ENCODE measurements at regions of chr6 and their contacts with region 1.

Region 1: GRCh38 chr6:26596579-26597388 is at the start of gene ABT1:
- DNase-seq: peak; percentile 99
- H3K4me3 ChIP-seq: peak within 1 kb of the TSS; percentile 30 to 87 (median 69)
- H3K27ac ChIP-seq: peak within 1 kb of the TSS; percentile 80
- H3K4me1 ChIP-seq: peaks cover 18% of the 10 kb centered on the region
- H3K27me3 ChIP-seq: peaks cover 8 to 11% of the 10 kb centered on the region in 2 experiments
- CTCF ChIP-seq: no peak
- POLR2A ChIP-seq: peak; percentile 80
- total RNA-seq, gene ABT1: 18.5 and 20.1 TPM in 2 replicates

Region 2: DNA sequence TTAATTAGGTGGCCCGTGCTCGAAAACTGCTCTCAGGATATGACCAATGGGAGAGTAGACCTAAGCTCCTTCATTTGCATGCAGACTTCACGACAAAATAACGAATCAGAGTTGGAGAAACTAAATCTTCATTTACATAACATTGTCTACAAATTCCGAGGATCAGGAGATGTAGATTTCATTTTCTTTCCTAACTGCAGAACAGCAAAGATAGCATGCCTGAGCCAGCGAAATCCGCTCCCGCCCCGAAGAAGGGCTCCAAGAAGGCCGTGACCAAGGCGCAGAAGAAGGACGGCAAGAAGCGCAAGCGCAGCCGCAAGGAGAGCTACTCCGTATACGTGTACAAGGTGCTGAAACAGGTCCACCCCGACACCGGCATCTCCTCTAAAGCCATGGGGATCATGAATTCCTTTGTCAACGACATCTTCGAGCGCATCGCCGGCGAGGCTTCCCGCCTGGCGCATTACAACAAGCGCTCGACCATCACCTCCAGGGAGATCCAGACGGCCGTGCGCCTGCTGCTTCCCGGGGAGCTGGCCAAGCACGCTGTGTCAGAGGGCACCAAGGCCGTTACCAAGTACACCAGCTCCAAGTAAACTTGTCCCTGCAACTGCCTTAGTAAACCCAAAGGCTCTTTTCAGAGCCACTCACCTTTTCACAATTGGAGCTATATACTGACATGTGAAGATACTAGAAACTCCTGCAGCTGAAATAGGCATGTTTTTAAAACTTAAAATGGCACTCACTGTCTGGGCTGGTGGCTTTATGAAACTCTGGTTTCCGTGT is 413.0 kb before region 1 on chr6:
- CTCF ChIA-PET with region 1: interaction called, 12 read pairs
- POLR2A ChIA-PET with region 1: no interaction called
- dilution Hi-C with region 1: no loop called
- intact Hi-C with region 1: no loop called
- DNase-seq: peak; percentile 93
- H3K4me3 ChIP-seq: peak overlapping the region; percentile 13 to 66 (median 34)
- H3K27ac ChIP-seq: peak overlapping the region; percentile 58
- H3K4me1 ChIP-seq: peaks cover 20% of the 10 kb centered on the region
- H3K27me3 ChIP-seq: no peaks in the 10 kb centered on the region
- CTCF ChIP-seq: no peak
- POLR2A ChIP-seq: peak; percentile 59

Region 3: GRCh38 chr6:26329763-26330511 is 266.8 kb before region 1 on chr6:
- CTCF ChIA-PET with region 1: interaction called, 18 read pairs
- POLR2A ChIA-PET with region 1: no interaction called
- dilution Hi-C with region 1: no loop called
- intact Hi-C with region 1: loop called (anchors 1 kb)
- DNase-seq: peak; percentile 52
- H3K4me3 ChIP-seq: peak overlapping the region in 2 of 3 experiments; percentile 92 to 95
- H3K27ac ChIP-seq: no peak overlapping the region
- H3K4me1 ChIP-seq: peaks cover 23% of the 10 kb centered on the region
- H3K27me3 ChIP-seq: peaks cover 0 to 7% of the 10 kb centered on the region in 2 experiments
- CTCF ChIP-seq: no peak
- POLR2A ChIP-seq: no peak

Region 4: DNA sequence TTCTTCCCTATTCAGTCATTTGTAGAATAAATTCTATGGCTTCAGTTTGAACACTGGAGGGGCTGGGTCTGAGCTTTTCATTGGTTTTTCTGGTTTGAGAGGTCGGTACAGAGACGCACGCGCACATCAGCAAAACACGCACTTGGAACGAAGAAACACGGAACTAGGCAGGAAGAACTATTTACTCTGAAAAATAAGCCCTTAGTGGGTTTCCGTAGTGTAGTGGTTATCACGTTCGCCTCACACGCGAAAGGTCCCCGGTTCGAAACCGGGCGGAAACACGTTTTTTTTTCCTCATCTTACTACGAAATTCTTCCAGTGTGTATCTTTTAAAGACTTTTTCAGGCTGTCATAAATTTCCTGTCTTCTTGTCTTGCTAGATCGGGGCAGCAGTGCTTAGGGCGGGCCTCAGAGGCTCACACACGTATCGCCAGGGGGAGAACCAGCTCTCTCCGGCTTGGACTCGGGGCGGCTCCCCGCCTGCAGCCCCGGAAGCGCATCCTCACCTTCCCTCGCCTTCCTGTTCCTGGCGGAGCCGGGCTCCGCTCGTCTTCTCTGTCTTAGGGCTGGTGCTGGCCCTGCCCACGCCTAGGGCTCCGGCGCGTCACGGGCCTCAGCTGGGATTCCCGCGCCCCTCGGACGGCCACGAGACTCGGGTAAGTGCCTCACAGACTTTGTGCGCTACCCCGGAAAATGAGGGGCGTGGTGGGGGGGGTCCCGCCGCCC is 58.8 kb before region 1 on chr6 and contains the start of gene HMGN4:
- CTCF ChIA-PET with region 1: interaction called, 22 read pairs
- POLR2A ChIA-PET with region 1: no interaction called
- dilution Hi-C with region 1: no loop called
- intact Hi-C with region 1: no loop called
- DNase-seq: peak; percentile 93
- H3K4me3 ChIP-seq: peak within 1 kb of the TSS; percentile 87 to 99 (median 98)
- H3K27ac ChIP-seq: peak within 1 kb of the TSS; percentile 85
- H3K4me1 ChIP-seq: peaks cover 21% of the 10 kb centered on the region
- H3K27me3 ChIP-seq: no peaks in the 10 kb centered on the region
- CTCF ChIP-seq: no peak
- POLR2A ChIP-seq: no peak
- total RNA-seq, gene HMGN4: 33.7 and 36.9 TPM in 2 replicates

Region 5: DNA sequence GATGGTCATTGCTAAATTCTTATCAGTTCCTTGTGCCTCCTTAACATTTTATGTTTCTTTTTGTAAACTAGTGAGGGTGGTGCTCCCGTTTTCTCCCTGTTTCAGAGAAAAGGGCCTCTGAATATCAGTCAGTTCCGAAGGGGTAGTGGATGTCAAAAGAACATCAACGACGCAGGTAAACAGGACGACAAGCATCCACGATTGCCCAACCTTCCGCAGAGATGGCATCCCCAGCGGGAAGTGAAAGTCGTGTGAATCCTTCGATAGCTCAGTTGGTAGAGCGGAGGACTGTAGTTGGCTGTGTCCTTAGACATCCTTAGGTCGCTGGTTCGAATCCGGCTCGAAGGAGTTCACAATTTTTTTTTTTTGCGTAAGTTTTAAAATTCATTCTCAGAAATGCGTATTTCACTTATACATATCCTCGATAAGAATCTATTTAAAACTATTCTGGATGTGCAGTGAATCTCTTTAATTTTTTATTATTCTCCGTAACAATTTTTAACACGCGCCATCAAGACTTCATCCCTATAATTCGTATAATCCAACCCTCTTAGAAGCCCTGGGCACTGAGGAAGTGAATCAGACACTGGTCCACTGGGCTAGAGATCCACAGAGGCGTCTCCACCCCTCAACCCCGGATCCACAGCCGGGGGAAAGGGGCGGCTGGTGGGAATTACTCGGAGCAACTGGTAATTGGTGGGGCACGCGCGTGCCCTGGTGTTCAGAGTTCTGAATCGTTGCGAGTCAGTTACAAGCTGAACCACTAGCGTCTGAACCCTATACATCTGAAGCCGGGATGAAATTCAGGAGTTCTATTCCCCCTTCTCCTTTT is 28.0 kb before region 1 on chr6:
- CTCF ChIA-PET with region 1: interaction called, 359 read pairs
- POLR2A ChIA-PET with region 1: no interaction called
- dilution Hi-C with region 1: no loop called
- intact Hi-C with region 1: loop called (anchors 1 kb)
- DNase-seq: peak; percentile 97
- H3K4me3 ChIP-seq: peak overlapping the region; percentile 50 to 95 (median 90)
- H3K27ac ChIP-seq: no peak overlapping the region
- H3K4me1 ChIP-seq: peaks cover 6% of the 10 kb centered on the region
- H3K27me3 ChIP-seq: no peaks in the 10 kb centered on the region
- CTCF ChIP-seq: peak in 1 of 2 donors; percentile 46
- POLR2A ChIP-seq: no peak

Region 6: DNA sequence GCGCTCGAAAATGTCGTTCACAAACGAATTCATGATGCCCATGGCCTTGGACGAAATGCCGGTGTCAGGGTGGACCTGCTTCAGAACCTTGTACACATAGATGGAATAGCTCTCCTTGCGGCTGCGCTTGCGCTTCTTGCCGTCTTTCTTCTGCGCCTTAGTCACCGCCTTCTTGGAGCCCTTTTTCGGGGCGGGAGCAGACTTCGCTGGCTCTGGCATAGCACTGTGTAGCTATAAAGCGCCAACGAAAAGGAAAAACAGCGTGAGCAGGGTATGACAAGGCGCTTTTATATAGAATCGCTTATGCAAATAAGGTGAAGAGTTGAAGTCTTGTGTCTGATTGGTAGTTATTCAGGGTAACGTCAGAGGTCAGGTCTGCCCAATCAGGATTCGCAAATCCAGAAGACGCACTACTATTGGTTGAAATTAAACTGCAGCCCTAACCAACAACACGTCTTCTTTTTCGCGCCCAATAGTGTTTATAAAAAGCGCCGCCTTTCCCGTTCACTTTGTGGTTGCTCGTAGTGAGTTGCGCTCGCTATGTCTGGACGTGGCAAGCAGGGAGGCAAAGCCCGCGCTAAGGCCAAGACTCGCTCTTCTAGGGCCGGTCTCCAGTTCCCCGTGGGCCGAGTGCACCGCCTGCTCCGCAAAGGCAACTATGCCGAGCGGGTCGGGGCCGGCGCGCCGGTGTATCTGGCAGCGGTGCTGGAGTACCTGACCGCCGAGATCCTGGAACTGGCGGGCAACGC is 535.9 kb after region 1 on chr6:
- CTCF ChIA-PET with region 1: interaction called, 8 read pairs
- POLR2A ChIA-PET with region 1: interaction called, 5 read pairs
- dilution Hi-C with region 1: no loop called
- intact Hi-C with region 1: loop called (anchors 5 kb)
- DNase-seq: peak; percentile 100
- H3K4me3 ChIP-seq: peak overlapping the region; percentile 37 to 81 (median 59)
- H3K27ac ChIP-seq: peak overlapping the region; percentile 86
- H3K4me1 ChIP-seq: peaks cover 19% of the 10 kb centered on the region
- H3K27me3 ChIP-seq: no peaks in the 10 kb centered on the region
- CTCF ChIP-seq: no peak
- POLR2A ChIP-seq: peak; percentile 76

Measured in endothelial cell of umbilical vein (primary cell).